Common myeloid progenitor, CD34-positive (primary cell): ENCODE measurements at regions of chr4 and their contacts with region 1.

Region 1: DNA sequence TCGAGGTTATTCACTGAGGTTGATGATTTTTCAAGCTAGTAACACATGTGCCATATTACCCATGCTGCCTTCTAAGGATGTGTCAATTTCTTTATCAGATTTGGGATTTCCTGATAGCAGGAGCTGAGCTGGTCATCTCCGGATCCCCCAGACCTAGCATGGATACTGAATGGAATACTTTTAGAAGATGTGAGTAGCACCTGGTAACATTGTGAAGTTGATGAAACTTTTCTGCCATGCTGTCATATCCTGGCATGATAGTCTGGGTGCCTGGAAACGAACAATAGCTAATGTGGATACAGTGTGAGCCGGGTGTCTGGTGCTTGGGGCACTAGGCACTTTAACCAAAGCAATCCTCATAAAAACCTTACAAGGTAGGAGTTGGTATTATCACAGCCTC is 11.0 kb upstream of the CYTL1 start:
- DNase-seq: no peak
- H3K4me3 ChIP-seq: no peak overlapping the region
- H3K27ac ChIP-seq: no peak overlapping the region
- H3K4me1 ChIP-seq: peaks cover 9 to 46% (median 38%) of the 10 kb centered on the region in 4 experiments
- H3K27me3 ChIP-seq: no peaks in the 10 kb centered on the region

Region 2: GRCh38 chr4:5019274-5019673 is 10.9 kb before region 1 on chr4 and contains the start of gene CYTL1:
- CTCF ChIA-PET with region 1: interaction called, 14 read pairs
- POLR2A ChIA-PET with region 1: no interaction called
- DNase-seq: peak in 2 of 3 donors; percentile 49 to 72
- H3K4me3 ChIP-seq: peak within 1 kb of the TSS; percentile 39 to 82 (median 71)
- H3K27ac ChIP-seq: peak within 1 kb of the TSS in 1 of 2 experiments; percentile 51
- H3K4me1 ChIP-seq: peaks cover 4 to 45% (median 25%) of the 10 kb centered on the region in 4 experiments
- H3K27me3 ChIP-seq: no peaks in the 10 kb centered on the region

Region 3: DNA sequence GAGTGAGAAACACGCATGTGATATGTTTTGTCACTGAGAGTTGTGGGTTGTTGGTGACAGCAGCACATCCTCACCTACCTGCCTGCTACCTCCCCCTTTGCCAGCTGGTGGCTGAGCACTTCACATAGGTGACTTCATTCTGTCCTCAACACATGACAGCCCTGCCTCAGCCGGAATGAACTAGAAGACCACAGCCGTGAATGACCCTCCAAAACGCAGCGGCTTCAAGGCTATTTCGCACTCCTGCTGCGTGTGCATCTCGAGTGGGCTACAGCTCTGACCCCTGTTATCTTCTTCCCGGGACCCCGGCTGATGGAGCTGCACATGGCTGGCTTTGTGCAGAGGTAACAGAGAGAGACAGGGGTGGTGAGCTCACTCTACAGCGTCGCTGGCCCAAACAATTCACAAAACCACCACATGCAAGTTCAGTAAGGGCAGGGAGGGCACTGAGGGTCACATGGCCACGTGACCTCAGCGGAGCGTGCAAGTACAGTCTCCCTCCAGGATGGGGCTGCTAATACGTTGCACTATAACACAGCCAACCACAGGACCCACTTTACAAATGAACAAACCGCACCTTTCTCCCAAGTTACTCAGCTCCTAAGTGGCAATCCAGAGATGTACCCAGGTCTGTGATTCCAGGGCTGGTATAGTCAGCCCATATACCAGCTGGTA is 1448.5 kb after region 1 on chr4:
- CTCF ChIA-PET with region 1: no interaction called
- POLR2A ChIA-PET with region 1: no interaction called
- DNase-seq: no peak
- H3K4me3 ChIP-seq: no peak overlapping the region
- H3K27ac ChIP-seq: no peak overlapping the region
- H3K4me1 ChIP-seq: no peaks in the 10 kb centered on the region
- H3K27me3 ChIP-seq: peaks cover 0 to 73% (median 26%) of the 10 kb centered on the region in 5 experiments